ENCODE measurements at regions of chr17 and their contacts with region 1.

Region 1: GRCh38 chr17:35540589-35541404 is 3.3 kb upstream of the SLFN12L start:
- DNase-seq: peak; percentile 81
- H3K4me3 Mint-ChIP-seq: peak overlapping the region; percentile 90
- H3K27ac Mint-ChIP-seq: peak overlapping the region; percentile 95
- H3K4me1 Mint-ChIP-seq: peaks cover 41% of the 10 kb centered on the region
- H3K27me3 Mint-ChIP-seq: no peaks in the 10 kb centered on the region

Region 2: GRCh38 chr17:35170968-35171771 is 369.6 kb before region 1 on chr17:
- intact Hi-C with region 1: loop called (anchors 1 kb)
- DNase-seq: peak; percentile 78
- H3K4me3 Mint-ChIP-seq: peak overlapping the region; percentile 19
- H3K27ac Mint-ChIP-seq: no peak overlapping the region
- H3K4me1 Mint-ChIP-seq: peaks cover 27% of the 10 kb centered on the region
- H3K27me3 Mint-ChIP-seq: no peaks in the 10 kb centered on the region

Region 3: GRCh38 chr17:35312790-35313711 is 227.7 kb before region 1 on chr17:
- intact Hi-C with region 1: loop called (anchors 1 kb)
- DNase-seq: peak; percentile 94
- H3K4me3 Mint-ChIP-seq: peak overlapping the region; percentile 85
- H3K27ac Mint-ChIP-seq: peak overlapping the region; percentile 88
- H3K4me1 Mint-ChIP-seq: peaks cover 34% of the 10 kb centered on the region
- H3K27me3 Mint-ChIP-seq: peaks cover 3% of the 10 kb centered on the region

Region 4: DNA sequence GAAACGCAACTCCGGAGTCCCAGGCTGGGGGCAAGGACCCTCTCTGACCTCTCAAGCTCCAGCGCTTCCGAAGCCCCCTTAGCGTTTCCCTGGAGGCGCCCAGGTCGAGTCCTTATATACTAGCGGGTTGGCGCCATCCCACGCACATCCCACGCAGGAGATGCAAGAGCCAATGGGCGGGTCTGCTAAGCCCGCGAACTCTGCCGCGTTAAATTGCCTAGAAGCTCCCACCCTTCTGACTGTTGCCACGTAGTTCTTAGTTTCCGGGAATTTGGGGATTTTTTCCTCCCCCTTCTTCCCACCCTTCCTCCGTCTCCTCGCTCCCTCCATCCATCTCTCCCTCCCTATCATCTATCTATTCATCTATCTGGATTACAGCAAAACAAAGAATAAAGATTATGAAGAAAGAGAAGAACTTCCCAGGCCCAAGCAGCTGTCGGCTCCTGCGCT is 167.2 kb before region 1 on chr17 and contains the start of gene SLFN11:
- intact Hi-C with region 1: loop called (anchors 1 kb)
- DNase-seq: peak; percentile 95
- H3K4me3 Mint-ChIP-seq: peak within 1 kb of the TSS; percentile 89
- H3K27ac Mint-ChIP-seq: peak within 1 kb of the TSS; percentile 93
- H3K4me1 Mint-ChIP-seq: peaks cover 51% of the 10 kb centered on the region
- H3K27me3 Mint-ChIP-seq: peaks cover 1% of the 10 kb centered on the region
- total RNA-seq, gene SLFN11: 72.3 and 73.6 TPM in 2 replicates

Region 5: DNA sequence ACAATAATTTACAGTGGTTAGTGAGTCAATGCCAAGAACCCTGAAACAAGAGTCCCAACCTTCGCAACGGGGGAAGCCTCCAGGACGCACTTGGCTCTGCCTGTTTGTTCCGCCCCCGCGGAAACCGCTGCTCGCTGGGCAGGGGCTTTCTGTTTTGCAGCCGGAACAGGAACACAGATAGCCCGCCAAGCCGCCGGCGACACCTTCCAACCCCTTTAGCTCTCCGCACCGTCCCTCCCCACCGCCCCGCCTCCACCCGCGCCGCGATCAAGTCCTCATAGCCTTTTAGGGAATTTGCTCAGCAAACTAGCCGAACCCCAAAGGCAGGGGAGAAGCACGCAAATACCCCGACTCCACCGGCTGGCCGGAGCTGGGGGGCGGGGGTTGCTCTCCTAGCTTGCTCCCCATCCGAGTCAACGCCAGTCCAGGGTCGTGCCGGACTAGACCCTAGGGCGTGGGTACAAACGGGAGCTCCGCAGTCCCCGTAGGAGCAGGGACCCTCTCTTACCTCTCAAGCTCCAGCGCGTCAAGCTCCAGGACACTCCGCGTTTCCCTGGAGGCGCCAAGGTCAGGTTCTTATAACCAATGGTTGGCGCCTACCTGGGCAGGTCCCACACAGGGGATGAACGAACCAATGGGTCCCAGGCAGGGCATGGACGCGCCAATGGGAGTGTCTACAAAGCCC is 92.4 kb before region 1 on chr17 and contains the start of gene SLFN13:
- intact Hi-C with region 1: loop called (anchors 2 kb)
- DNase-seq: peak; percentile 95
- H3K4me3 Mint-ChIP-seq: peak within 1 kb of the TSS; percentile 69
- H3K27ac Mint-ChIP-seq: peak within 1 kb of the TSS; percentile 77
- H3K4me1 Mint-ChIP-seq: peaks cover 13% of the 10 kb centered on the region
- H3K27me3 Mint-ChIP-seq: no peaks in the 10 kb centered on the region
- total RNA-seq, gene SLFN13: 34.5 and 36.8 TPM in 2 replicates

Region 6: GRCh38 chr17:35555695-35556094 is 14.9 kb after region 1 on chr17:
- intact Hi-C with region 1: no loop called
- DNase-seq: no peak
- H3K4me3 Mint-ChIP-seq: no peak overlapping the region
- H3K27ac Mint-ChIP-seq: no peak overlapping the region
- H3K4me1 Mint-ChIP-seq: peaks cover 4% of the 10 kb centered on the region
- H3K27me3 Mint-ChIP-seq: peaks cover 36% of the 10 kb centered on the region

Region 7: DNA sequence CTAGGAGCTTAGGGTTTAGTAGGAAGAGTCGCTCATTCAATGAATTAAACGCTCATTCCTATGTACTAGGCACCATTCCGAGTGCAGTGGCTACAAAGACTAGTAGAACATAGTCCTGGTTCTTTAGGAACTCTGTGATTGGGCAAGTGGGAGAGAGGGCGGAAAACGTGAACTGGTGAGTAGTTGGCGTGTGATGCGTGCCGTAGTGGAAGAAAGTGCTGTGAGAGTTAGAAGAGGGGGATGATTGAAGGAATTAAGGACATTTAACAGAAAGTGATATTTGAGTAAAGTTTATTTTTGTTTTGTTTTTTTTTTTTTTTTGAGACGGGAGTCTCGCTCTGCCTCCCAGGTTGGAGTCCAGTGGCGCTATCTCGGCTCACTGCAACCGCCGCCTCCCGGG is 27.7 kb after region 1 on chr17:
- intact Hi-C with region 1: loop called (anchors 1 kb)
- DNase-seq: peak; percentile 75
- H3K4me3 Mint-ChIP-seq: peak overlapping the region; percentile 83
- H3K27ac Mint-ChIP-seq: peak overlapping the region; percentile 89
- H3K4me1 Mint-ChIP-seq: peaks cover 21% of the 10 kb centered on the region
- H3K27me3 Mint-ChIP-seq: peaks cover 14% of the 10 kb centered on the region

Region 8: DNA sequence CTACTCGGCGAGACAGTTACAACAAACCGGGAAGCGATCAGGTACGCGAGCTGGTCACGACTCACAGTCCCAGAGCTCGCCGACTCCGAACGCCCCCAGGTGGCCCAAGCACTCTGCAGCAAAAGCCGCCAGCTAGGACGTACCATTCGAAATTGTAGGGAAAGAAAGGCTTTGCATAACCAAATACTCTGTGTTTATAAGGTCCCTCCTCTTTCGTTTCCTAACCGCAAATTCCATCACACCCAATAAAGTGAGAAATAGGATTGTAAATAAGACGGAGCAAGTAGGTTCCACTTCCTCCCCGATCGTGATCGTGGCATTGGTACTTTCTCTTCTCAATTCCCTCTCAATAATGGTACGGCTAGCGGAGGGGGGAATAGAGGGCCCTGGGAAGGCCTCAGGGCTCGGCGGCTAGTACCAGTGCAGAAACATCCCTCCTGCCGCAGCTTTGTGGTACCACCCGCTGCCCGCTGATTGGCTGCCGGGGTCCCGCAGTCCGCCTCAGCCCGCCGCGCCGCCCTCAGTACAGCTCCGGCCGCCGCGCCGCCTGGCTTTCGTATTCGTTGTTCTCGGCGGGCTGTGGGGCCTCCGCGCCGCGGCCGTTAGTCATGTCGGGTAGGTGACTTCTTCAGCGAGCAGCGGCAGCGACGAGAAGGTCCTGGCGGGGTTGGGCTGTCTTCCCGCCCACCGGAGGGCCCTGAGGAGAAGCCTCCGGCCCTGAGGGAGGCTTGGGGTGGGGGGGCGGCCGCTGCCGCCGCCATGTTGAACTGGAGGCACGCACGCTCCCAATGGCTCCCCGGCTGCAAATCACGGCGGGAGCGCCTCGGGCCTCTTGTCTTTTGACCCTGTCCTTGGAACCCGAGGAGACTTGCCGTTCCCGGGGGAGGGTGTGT is 268.4 kb after region 1 on chr17 and contains the start of gene TAF15:
- intact Hi-C with region 1: loop called (anchors 5 kb)
- DNase-seq: peak; percentile 99
- H3K4me3 Mint-ChIP-seq: peak within 1 kb of the TSS; percentile 99
- H3K27ac Mint-ChIP-seq: peak within 1 kb of the TSS; percentile 97
- H3K4me1 Mint-ChIP-seq: peaks cover 48% of the 10 kb centered on the region
- H3K27me3 Mint-ChIP-seq: no peaks in the 10 kb centered on the region
- total RNA-seq, gene TAF15: 326 and 338 TPM in 2 replicates

Measured in activated CD4-positive, alpha-beta T cell treated with anti-CD3 and anti-CD28 coated beads, Interleukin-2, amount 10 ng/mL, durations not matched to agents 24 days and 14 days (primary cell).